Activated CD4-positive, alpha-beta T cell treated with anti-CD3 and anti-CD28 coated beads for 36 hours (primary cell): ENCODE measurements at regions of chr6 and their contacts with region 1.

Region 1: GRCh38 chr6:39361657-39362486 is 39.4 kb upstream of the KCNK16 start:
- DNase-seq: peak; percentile 74
- ATAC-seq: peak; percentile 74
- H3K4me3 Mint-ChIP-seq: no peak overlapping the region
- H3K27ac Mint-ChIP-seq: no peak overlapping the region
- H3K4me1 Mint-ChIP-seq: no peaks in the 10 kb centered on the region
- H3K27me3 Mint-ChIP-seq: no peaks in the 10 kb centered on the region

Region 2: GRCh38 chr6:39322306-39322850 is 39.5 kb before region 1 on chr6 and contains the start of gene KCNK16:
- CTCF ChIA-PET with region 1: no interaction called
- POLR2A ChIA-PET with region 1: no interaction called
- intact Hi-C with region 1: no loop called
- DNase-seq: no peak
- ATAC-seq: no peak
- H3K4me3 Mint-ChIP-seq: no peak within 1 kb of the TSS
- H3K27ac Mint-ChIP-seq: no peak within 1 kb of the TSS
- H3K4me1 Mint-ChIP-seq: no peaks in the 10 kb centered on the region
- H3K27me3 Mint-ChIP-seq: peaks cover 3% of the 10 kb centered on the region
- total RNA-seq, gene KCNK16: not detected

Region 3: DNA sequence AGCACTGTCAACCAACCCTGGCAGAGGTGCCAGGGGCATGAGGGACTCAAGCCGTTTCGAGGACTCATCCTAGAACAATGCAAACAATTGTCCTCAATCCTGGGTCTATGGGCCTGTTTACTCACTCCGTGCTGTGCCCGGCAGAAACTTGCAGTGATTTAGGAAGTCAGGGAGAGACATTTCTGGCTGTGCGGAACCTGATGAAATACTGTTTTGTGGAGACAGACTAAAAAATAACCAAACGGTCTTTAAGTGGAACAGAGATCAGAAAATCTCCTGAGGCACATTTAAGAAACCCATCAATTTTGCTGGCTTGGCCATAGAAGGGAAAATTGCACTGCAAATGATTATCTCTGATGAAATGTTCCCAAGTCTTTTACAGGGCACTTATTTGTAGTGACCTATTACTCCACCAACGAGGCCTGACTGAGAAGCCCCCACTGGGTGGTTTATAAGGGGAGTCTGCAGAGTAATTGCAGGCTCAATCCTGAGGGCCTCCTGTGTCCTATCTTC is 40.4 kb after region 1 on chr6:
- CTCF ChIA-PET with region 1: no interaction called
- POLR2A ChIA-PET with region 1: no interaction called
- intact Hi-C with region 1: no loop called
- DNase-seq: no peak
- ATAC-seq: no peak
- H3K4me3 Mint-ChIP-seq: no peak overlapping the region
- H3K27ac Mint-ChIP-seq: no peak overlapping the region
- H3K4me1 Mint-ChIP-seq: no peaks in the 10 kb centered on the region
- H3K27me3 Mint-ChIP-seq: no peaks in the 10 kb centered on the region

Region 4: DNA sequence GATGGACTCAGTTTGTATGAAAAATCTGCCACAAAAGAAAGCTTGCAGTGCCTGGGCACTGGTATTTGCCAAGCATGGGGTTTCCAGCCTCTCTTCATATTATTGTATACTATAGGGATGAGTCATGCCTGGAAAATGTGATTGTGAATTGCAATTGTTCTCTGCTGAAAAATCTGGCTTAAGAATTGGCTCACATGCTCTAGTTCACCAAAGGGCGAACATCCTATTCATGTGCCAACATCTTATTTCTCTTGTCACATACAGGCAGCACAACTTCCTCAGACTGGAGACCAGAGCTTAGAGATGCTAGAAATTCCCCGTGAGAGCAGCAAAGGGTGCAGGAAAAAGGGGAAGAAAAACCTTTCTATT is 64.2 kb after region 1 on chr6:
- CTCF ChIA-PET with region 1: no interaction called
- POLR2A ChIA-PET with region 1: no interaction called
- intact Hi-C with region 1: no loop called
- DNase-seq: peak; percentile 22
- ATAC-seq: peak; percentile 66
- H3K4me3 Mint-ChIP-seq: no peak overlapping the region
- H3K27ac Mint-ChIP-seq: no peak overlapping the region
- H3K4me1 Mint-ChIP-seq: peaks cover 5% of the 10 kb centered on the region
- H3K27me3 Mint-ChIP-seq: peaks cover 3% of the 10 kb centered on the region

Region 5: GRCh38 chr6:39865011-39865888 is 503.4 kb after region 1 on chr6:
- CTCF ChIA-PET with region 1: no interaction called
- POLR2A ChIA-PET with region 1: no interaction called
- intact Hi-C with region 1: loop called in 1 of 2 experiments (anchors 10 kb)
- DNase-seq: peak; percentile 83
- ATAC-seq: peak; percentile 44
- H3K4me3 Mint-ChIP-seq: no peak overlapping the region
- H3K27ac Mint-ChIP-seq: no peak overlapping the region
- H3K4me1 Mint-ChIP-seq: no peaks in the 10 kb centered on the region
- H3K27me3 Mint-ChIP-seq: peaks cover 4% of the 10 kb centered on the region

Region 6: DNA sequence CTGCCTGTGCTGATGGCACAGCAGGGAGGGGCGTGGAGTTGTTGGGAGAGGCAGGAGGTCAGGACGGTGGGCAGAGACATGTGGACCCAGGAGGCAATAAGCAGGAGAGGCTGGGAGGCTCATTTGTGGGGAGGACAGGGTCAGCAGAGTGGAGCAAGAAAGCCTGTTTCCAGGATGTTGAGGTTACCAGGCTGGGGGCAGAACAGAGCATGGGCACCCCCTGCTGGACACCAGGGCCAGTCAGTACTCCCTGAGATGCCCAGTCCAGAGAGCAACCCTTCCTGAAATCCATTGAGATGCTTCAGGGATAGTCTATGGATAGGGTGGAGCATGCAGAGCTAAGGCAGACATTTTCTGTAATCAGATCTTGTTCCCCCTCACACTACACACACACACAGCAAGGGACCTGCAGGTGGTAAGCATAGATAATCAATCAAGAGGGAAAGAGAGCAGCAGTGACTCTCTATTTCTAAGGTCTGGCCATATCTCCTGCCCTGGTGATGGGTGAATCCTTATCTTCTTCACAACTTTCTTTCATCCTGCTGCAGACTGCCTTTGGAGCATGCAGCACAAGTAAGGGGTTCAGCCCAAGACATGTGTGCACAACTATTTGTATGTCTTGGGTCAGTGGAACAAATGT is 530.7 kb after region 1 on chr6:
- CTCF ChIA-PET with region 1: interaction called, 7 read pairs
- POLR2A ChIA-PET with region 1: no interaction called
- intact Hi-C with region 1: loop called in 1 of 2 experiments (anchors 1 kb)
- DNase-seq: peak; percentile 53
- ATAC-seq: no peak
- H3K4me3 Mint-ChIP-seq: no peak overlapping the region
- H3K27ac Mint-ChIP-seq: no peak overlapping the region
- H3K4me1 Mint-ChIP-seq: no peaks in the 10 kb centered on the region
- H3K27me3 Mint-ChIP-seq: peaks cover 5% of the 10 kb centered on the region